Esophagus muscularis mucosa (tissue), 4 donors: ENCODE measurements at regions of chr17 and their contacts with region 1.

Region 1: DNA sequence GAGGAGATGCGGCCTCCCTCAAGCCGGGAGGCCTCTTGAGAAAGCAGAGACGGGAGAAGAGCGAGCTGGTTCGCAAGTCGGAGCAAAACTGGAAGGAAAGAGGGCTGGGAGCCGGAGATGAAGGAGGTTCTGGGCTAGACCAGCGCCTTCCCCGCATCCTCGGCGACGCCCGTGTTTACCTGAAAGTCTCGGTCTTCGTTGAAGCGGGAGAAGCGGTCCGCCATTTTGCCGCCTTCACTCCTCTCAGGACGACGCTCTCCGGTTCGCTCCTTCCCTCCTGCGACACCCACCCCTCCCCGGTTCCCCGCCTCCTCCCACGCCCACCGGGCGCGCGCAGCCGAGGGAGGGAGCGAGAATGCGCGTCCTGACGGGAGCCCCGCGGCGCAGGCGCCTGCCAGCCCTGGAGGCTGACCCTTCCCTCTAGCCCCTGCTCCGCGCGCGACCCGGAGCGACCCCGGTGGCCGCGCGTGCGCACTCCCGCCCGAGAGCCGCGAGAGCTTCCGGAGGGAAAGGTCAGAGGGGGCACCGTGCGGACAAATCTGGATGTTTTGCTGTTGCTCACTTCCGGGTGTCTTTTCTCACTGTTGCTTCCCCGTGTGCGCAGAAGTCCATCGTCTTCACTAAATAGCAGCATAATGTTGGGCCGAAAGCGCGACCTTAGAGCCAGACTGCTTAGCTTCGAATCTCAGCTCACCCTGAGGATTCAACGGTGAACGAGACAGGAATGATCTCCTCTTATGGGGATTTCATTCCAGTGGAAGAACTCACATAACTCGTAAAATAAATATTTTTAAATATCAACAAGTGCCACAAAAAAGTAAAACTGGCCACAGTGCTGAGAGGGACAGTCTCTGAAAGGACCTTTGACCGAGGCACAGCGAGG is at the start of gene GPATCH8:
- DNase-seq: peak; percentile 97
- H3K4me3 ChIP-seq: peak within 1 kb of the TSS; percentile 71 to 91 (median 81)
- H3K27ac ChIP-seq: peak within 1 kb of the TSS; percentile 91 to 95 (median 92)
- H3K4me1 ChIP-seq: peaks cover 27 to 51% (median 48%) of the 10 kb centered on the region in 4 donors
- H3K27me3 ChIP-seq: peaks cover 0 to 8% (median 0%) of the 10 kb centered on the region in 4 donors
- CTCF ChIP-seq: no peak
- EP300 ChIP-seq: no peak
- POLR2A ChIP-seq: no peak
- total RNA-seq, gene GPATCH8: 21.0 to 51.1 (median 27.9) TPM

Region 2: GRCh38 chr17:44417553-44417952 is 85.8 kb before region 1 on chr17:
- intact Hi-C with region 1: loop called (anchors 10 kb)
- DNase-seq: no peak
- H3K4me3 ChIP-seq: no peak overlapping the region
- H3K27ac ChIP-seq: peak overlapping the region; percentile 13 to 52 (median 28)
- H3K4me1 ChIP-seq: peaks cover 0 to 19% (median 12%) of the 10 kb centered on the region in 4 donors
- H3K27me3 ChIP-seq: no peaks in the 10 kb centered on the region
- CTCF ChIP-seq: no peak
- EP300 ChIP-seq: no peak
- POLR2A ChIP-seq: no peak